PC-9 (cell line): ENCODE measurements at regions of chrX and their contacts with region 1.

Region 1: GRCh38 chrX:100928660-100929613 is at the start of gene XKRX:
- DNase-seq: peak; percentile 73 to 76
- H3K4me3 ChIP-seq: peak within 1 kb of the TSS; percentile 65
- H3K27ac ChIP-seq: 0 out of 2 replicates have a peak within 1 kb of the TSS, but pooled peaks have one; percentile 5
- H3K4me1 ChIP-seq: peaks cover 29% of the 10 kb centered on the region
- H3K27me3 ChIP-seq: no peaks in the 10 kb centered on the region
- CTCF ChIP-seq: no peak
- total RNA-seq, gene XKRX: 1.2 and 1.4 TPM in 2 replicates

Region 2: DNA sequence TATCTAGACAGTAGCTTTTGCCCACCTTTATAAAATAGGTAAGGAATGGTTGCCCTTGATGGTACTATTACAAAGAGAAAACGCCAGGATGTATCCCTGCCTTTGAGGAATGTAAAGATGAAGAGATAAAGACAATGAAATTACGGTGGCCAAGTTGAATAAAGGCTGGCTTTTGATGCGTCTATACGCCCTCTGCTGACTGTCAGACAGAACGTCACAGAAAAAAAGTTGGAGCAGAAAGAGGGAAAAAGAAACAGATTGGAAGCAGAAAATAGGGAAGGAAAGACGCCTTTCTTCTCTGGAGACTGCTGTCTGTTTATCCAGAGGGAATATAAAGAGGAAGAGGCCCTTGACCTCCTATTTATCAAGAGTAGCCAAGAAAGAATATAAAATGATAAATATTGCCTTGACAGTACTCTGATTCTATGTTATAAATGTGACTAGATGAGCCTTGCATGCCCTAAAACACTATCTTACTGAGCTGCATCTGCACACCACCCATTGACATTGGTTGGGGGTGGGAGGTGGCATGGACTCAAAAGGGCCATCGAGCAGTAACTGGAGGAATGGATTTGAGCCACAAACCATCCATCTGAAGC is 549.5 kb before region 1 on chrX:
- CTCF ChIA-PET with region 1: no interaction called
- POLR2A ChIA-PET with region 1: no interaction called
- intact Hi-C with region 1: no loop called
- DNase-seq: peak in 1 of 2 experiments; percentile 55
- H3K4me3 ChIP-seq: no peak overlapping the region
- H3K27ac ChIP-seq: no peak overlapping the region
- H3K4me1 ChIP-seq: 0 out of 2 replicates have a peak, but pooled peaks cover 4% of the 10 kb centered on the region
- H3K27me3 ChIP-seq: no peaks in the 10 kb centered on the region
- CTCF ChIP-seq: peak; percentile 67

Region 3: GRCh38 chrX:100980605-100981497 is 51.9 kb after region 1 on chrX:
- CTCF ChIA-PET with region 1: no interaction called
- POLR2A ChIA-PET with region 1: no interaction called
- intact Hi-C with region 1: loop called (anchors 1 kb)
- DNase-seq: peak; percentile 88 to 90
- H3K4me3 ChIP-seq: no peak overlapping the region
- H3K27ac ChIP-seq: peak overlapping the region; percentile 100
- H3K4me1 ChIP-seq: peaks cover 48% of the 10 kb centered on the region
- H3K27me3 ChIP-seq: no peaks in the 10 kb centered on the region
- CTCF ChIP-seq: no peak

Region 4: DNA sequence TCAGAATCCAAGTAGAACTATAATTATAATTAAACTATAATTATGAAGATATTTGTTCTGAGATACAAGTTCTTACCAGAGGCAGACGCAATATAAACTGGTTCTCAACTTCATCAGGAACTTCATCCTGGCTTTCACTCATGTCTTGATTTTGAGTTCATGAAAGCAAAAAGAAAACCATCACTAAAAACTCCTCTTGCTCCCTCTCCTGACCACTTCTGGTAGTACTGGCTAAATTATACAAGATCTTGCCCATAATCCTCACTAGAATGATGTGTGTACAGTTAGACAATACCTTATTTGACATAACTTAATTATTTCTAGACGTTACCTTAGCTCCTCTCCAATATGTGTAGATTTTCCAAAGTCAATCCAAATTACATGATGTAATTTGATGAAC is 358.5 kb after region 1 on chrX:
- CTCF ChIA-PET with region 1: no interaction called
- POLR2A ChIA-PET with region 1: no interaction called
- intact Hi-C with region 1: no loop called
- DNase-seq: peak in 1 of 2 experiments; percentile 4
- H3K4me3 ChIP-seq: no peak overlapping the region
- H3K27ac ChIP-seq: no peak overlapping the region
- H3K4me1 ChIP-seq: no peaks in the 10 kb centered on the region
- H3K27me3 ChIP-seq: no peaks in the 10 kb centered on the region
- CTCF ChIP-seq: peak; percentile 68